ENCODE measurements at regions of chr11 and their contacts with region 1.

Region 1: GRCh38 chr11:122853971-122854446 is 15.7 kb downstream of the CRTAM start:
- H3K4me3 ChIP-seq: no peak overlapping the region
- H3K27ac ChIP-seq: no peak overlapping the region
- H3K4me1 ChIP-seq: 0 out of 2 replicates have a peak, but pooled peaks cover 3% of the 10 kb centered on the region
- CTCF ChIP-seq: peak; percentile 27; the same call in 1 of the 2 replicates

Region 2: GRCh38 chr11:122788781-122789535 is 65.1 kb before region 1 on chr11:
- CTCF ChIA-PET with region 1: interaction called, 131 read pairs
- POLR2A ChIA-PET with region 1: no interaction called
- H3K4me3 ChIP-seq: no peak overlapping the region
- H3K27ac ChIP-seq: no peak overlapping the region
- H3K4me1 ChIP-seq: no peaks in the 10 kb centered on the region
- CTCF ChIP-seq: no peak

Region 3: GRCh38 chr11:122808478-122808869 is 45.5 kb before region 1 on chr11:
- CTCF ChIA-PET with region 1: interaction called, 46 read pairs
- POLR2A ChIA-PET with region 1: no interaction called
- H3K4me3 ChIP-seq: no peak overlapping the region
- H3K27ac ChIP-seq: no peak overlapping the region
- H3K4me1 ChIP-seq: no peaks in the 10 kb centered on the region
- CTCF ChIP-seq: no peak

Region 4: GRCh38 chr11:122832721-122833470 is 21.1 kb before region 1 on chr11:
- CTCF ChIA-PET with region 1: interaction called, 13 read pairs
- POLR2A ChIA-PET with region 1: no interaction called
- H3K4me3 ChIP-seq: no peak overlapping the region
- H3K27ac ChIP-seq: no peak overlapping the region
- H3K4me1 ChIP-seq: no peaks in the 10 kb centered on the region
- CTCF ChIP-seq: no peak

Measured in HEK293 (cell line).